Activated CD8-positive, alpha-beta T cell treated with anti-CD3 and anti-CD28 coated beads for 36 hours (primary cell): ENCODE measurements at regions of chr10 and their contacts with region 1.

Region 1: DNA sequence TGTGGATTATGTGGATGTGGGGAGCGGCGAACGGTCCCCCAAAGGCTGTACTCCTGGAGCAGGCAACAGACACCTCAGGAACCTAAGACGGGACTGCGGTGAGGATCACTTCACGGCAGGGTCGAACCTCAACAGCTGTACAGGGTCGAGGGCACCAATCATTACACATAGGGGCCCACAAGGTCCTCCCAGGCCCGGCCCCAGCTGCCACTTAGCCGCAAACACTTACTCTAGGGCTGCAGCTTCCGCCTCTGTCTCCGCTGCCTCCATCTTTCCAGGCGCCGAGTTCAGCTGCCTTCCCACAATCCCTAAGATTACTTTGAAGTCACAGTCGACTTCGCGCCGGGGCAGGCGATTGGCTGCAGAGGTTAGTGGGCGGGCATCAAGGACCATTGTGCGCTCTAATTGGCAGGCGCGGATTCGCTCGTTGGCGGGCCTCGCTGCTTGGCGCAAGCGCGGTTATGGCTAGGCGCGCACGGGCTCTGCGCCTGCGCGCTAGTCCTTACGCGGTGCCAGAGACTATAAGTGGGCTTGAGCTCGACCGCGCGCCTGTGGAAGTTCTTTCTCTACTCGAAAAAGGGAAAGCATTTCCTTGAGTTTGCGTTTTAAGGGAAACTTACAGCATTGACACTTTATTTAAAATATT is at the start of gene ZWINT:
- DNase-seq: peak; percentile 96
- ATAC-seq: peak; percentile 99
- H3K4me3 Mint-ChIP-seq: peak within 1 kb of the TSS; percentile 96
- H3K27ac Mint-ChIP-seq: peak within 1 kb of the TSS; percentile 96
- H3K4me1 Mint-ChIP-seq: peaks cover 39% of the 10 kb centered on the region
- H3K27me3 Mint-ChIP-seq: no peaks in the 10 kb centered on the region
- CTCF ChIP-seq: no peak
- total RNA-seq, gene ZWINT: 65.4 to 69.5 TPM

Region 2: GRCh38 chr10:56349611-56350010 is 11.5 kb before region 1 on chr10:
- CTCF ChIA-PET with region 1: interaction called, 10 read pairs
- POLR2A ChIA-PET with region 1: interaction called, 10 read pairs
- intact Hi-C with region 1: no loop called
- DNase-seq: no peak
- ATAC-seq: no peak
- H3K4me3 Mint-ChIP-seq: no peak overlapping the region
- H3K27ac Mint-ChIP-seq: no peak overlapping the region
- H3K4me1 Mint-ChIP-seq: no peaks in the 10 kb centered on the region
- H3K27me3 Mint-ChIP-seq: no peaks in the 10 kb centered on the region
- CTCF ChIP-seq: no peak